Left cardiac atrium (tissue), 4 donors: ENCODE measurements at regions of chr4 and their contacts with region 1.

Region 1: GRCh38 chr4:1249148-1249730 is 309 bp upstream of the CTBP1 start:
- DNase-seq: peak; percentile 91
- ATAC-seq: peak; percentile 56 to 75

Region 2: GRCh38 chr4:1041147-1041935 is 207.9 kb before region 1 on chr4:
- intact Hi-C with region 1: no loop called
- DNase-seq: no peak
- ATAC-seq: peak in 1 of 2 donors; percentile 2

Region 3: DNA sequence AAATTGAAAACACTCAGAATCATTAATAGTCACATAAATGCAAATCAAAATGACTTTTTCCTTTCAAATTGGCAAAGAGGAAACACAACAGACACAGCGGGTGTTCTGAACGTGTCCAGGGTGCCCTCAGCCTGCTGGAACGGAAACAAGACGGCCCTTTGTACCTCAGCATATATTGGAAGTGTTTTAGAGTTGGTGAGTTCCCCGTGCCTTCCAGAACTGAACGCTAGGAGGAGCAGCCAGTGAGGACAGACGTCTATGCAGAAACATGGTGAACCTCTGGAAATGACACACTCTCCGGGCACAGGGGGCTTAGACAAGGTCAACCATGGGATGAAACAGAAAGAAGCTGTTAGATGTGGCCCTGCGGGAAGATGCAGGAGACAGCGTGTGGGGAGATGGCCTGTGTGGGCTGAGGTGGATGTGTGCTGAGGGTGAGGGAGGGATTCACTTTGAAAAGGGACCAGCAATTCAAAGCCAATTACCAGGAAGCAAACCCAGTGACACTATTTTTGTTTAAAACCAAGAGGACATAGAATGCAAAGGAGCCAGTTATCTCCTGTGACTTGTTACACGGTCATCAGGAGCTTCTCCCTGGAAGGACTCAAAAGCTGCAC is 176.3 kb before region 1 on chr4:
- intact Hi-C with region 1: no loop called
- DNase-seq: peak; percentile 57
- ATAC-seq: peak; percentile 59 to 69

Region 4: GRCh38 chr4:1167247-1167949 is 81.8 kb before region 1 on chr4:
- intact Hi-C with region 1: loop called (anchors 5 to 10 kb)
- DNase-seq: peak; percentile 85
- ATAC-seq: peak; percentile 84

Region 5: DNA sequence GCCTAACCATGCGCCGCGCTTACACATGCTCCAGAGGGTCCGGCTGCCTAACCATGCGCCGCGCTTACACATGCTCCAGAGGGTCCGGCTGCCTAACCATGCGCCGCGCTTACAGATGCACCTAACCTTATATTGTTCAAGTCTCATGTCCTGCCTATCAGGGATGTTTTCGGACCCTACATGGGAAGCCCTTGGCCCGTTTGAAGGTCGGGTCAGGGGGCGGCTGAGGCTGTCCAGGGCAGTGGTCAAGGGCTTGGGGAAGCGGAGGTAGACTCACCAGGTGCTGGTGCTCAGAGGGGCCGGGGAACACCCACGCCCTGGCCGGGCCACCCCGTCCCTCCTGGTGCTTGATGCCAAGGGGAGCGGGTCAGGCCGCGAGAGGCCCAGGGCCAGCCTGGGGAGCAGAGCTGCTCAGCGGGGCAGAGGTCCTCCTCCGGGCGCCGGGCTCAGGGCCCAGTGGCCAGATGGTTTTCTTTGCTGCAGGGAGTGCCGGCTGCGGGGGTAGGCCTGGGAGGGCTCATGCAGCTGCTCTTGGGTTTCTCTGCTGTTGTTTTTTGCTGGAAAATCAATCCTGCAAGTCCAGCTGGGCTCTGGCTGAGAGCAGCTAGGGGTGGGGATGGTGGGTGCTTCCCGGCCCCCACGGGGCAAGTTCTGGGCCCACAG is 41.5 kb before region 1 on chr4:
- intact Hi-C with region 1: no loop called
- DNase-seq: peak; percentile 71
- ATAC-seq: peak; percentile 51 to 58

Region 6: DNA sequence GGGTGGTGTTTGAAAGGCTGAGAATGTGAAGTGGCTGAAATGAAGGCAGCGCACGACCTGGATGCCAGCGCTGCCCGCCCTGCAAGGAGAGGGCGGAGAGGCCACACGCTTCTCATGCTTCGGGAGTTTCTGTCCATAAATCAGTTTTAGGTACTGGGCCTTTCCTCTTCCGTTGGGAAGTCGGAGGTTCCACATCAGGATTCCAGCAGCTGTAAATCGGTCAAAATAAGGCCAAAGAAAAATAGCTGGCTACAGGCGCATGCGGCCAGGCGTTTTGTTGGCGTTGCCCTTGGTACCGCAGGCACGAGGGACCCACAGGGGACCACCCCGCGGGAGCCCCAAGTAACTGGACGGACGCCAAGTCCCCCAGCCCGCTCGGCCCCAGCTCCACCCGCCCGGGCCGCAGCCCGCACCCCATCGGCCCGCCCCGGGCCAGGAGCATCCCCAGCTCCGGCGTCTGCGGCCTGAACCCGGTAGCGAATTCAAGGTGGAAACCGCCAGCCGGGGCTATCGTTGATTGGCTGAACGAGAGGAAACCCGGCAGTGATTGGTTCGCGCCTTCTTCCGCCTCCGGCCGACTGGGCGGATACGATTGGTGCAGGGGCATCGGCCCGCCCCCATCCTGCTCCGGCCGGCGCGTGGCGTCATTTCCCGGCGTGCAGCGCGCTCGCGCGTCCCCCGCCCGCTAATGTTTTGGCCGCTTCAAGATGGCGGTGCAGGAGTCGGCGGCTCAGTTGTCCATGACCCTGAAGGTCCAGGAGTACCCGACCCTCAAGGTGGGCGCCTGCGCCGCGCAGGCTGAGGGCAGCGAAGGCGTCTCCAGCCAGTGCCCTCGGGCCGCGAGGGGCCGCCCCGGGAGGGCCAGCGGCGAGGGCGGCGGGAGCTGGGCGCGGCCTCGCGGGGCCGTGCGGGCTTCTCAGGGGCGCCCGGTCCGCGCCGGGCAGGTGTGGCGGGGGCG is 40.2 kb after region 1 on chr4 and contains the start of gene MAEA:
- intact Hi-C with region 1: loop called in 1 of 2 experiments (anchors 5 kb)
- DNase-seq: peak; percentile 98
- ATAC-seq: peak; percentile 98 to 99
- total RNA-seq, gene MAEA: 41.9 to 59.3 TPM

Region 7: GRCh38 chr4:2484993-2485392 is 1235.8 kb after region 1 on chr4:
- intact Hi-C with region 1: no loop called
- DNase-seq: peak; percentile 82
- ATAC-seq: peak; percentile 78 to 87